CD4-positive, alpha-beta T cell (primary cell): ENCODE measurements at regions of chr1 and their contacts with region 1.

Region 1: GRCh38 chr1:34852677-34853217 is 6.8 kb downstream of the SMIM12 start:
- DNase-seq: peak; percentile 74 to 96 (median 84)
- ATAC-seq: peak; percentile 100
- H3K4me3 ChIP-seq: no peak overlapping the region
- H3K4me3 Mint-ChIP-seq: no peak overlapping the region
- H3K27ac ChIP-seq: no peak overlapping the region
- H3K27ac Mint-ChIP-seq: peak overlapping the region; percentile 48
- H3K4me1 ChIP-seq: peaks cover 9% of the 10 kb centered on the region
- H3K4me1 Mint-ChIP-seq: peaks cover 26% of the 10 kb centered on the region
- H3K27me3 ChIP-seq: no peaks in the 10 kb centered on the region
- H3K27me3 Mint-ChIP-seq: no peaks in the 10 kb centered on the region
- CTCF ChIP-seq: peak; percentile 92

Region 2: GRCh38 chr1:34688006-34688741 is 164.6 kb before region 1 on chr1:
- CTCF ChIA-PET with region 1: no interaction called
- POLR2A ChIA-PET with region 1: no interaction called
- intact Hi-C with region 1: no loop called
- DNase-seq: no peak
- ATAC-seq: no peak
- H3K4me3 ChIP-seq: no peak overlapping the region
- H3K4me3 Mint-ChIP-seq: no peak overlapping the region
- H3K27ac ChIP-seq: no peak overlapping the region
- H3K27ac Mint-ChIP-seq: no peak overlapping the region
- H3K4me1 ChIP-seq: no peaks in the 10 kb centered on the region
- H3K4me1 Mint-ChIP-seq: peaks cover 7% of the 10 kb centered on the region
- H3K27me3 ChIP-seq: peaks cover 0 to 5% of the 10 kb centered on the region in 2 experiments
- H3K27me3 Mint-ChIP-seq: peaks cover 41% of the 10 kb centered on the region
- CTCF ChIP-seq: no peak

Region 3: GRCh38 chr1:34786521-34787325 is 66.0 kb before region 1 on chr1:
- CTCF ChIA-PET with region 1: interaction called, 8 read pairs
- POLR2A ChIA-PET with region 1: no interaction called
- intact Hi-C with region 1: loop called (anchors 1 kb)
- DNase-seq: peak; percentile 29 to 78 (median 48)
- ATAC-seq: peak; percentile 84
- H3K4me3 ChIP-seq: no peak overlapping the region
- H3K4me3 Mint-ChIP-seq: no peak overlapping the region
- H3K27ac ChIP-seq: no peak overlapping the region
- H3K27ac Mint-ChIP-seq: no peak overlapping the region
- H3K4me1 ChIP-seq: peaks cover 5% of the 10 kb centered on the region
- H3K4me1 Mint-ChIP-seq: peaks cover 5% of the 10 kb centered on the region
- H3K27me3 ChIP-seq: peaks cover 14 to 36% of the 10 kb centered on the region in 2 experiments
- H3K27me3 Mint-ChIP-seq: peaks cover 58% of the 10 kb centered on the region
- CTCF ChIP-seq: peak; percentile 73

Region 4: DNA sequence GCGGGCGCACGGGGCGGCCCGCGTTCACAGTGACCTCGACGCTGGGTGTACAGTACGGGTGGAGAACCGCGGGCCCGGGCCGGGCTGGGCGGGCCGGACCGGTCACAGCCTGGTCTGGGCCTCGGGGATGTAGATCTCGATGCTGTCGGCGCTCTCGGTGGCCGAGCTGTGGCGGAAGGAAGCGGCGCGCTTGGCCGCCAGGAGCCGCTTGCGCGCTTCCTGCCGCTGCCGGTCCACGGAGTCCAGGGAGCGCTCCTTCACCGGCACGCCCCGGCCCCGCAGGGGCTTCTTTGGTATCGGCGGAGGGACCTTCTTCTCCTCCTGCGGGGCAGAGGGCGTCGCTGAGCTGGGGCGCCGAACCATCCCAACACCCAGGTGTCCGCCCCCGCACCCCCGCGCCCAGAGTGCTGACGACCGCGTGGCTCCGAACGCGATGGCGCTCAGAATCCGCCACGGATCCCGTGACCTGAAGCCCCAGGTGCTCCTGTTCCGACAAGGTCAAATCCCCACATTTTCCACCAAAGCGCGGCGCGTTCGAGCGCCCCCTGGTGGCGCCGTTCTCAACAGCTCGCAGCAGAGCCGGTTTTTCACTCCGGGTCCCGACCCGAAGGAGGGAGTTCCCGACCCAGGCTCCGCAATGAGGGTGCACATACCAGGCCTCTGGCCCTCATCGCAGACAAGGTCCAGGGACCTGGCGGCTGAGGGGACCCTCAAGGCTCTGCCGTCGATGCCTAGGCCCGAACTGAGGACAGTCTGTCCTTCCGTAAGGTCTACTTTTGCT is 13.4 kb after region 1 on chr1:
- CTCF ChIA-PET with region 1: interaction called, 131 read pairs
- POLR2A ChIA-PET with region 1: interaction called, 7 read pairs
- intact Hi-C with region 1: loop called in 1 of 2 experiments (anchors 1 kb)
- DNase-seq: peak; percentile 81 to 98 (median 92)
- ATAC-seq: peak; percentile 85
- H3K4me3 ChIP-seq: peak overlapping the region; percentile 62
- H3K4me3 Mint-ChIP-seq: peak overlapping the region; percentile 89
- H3K27ac ChIP-seq: peak overlapping the region; percentile 55 to 73
- H3K27ac Mint-ChIP-seq: peak overlapping the region; percentile 82
- H3K4me1 ChIP-seq: peaks cover 54% of the 10 kb centered on the region
- H3K4me1 Mint-ChIP-seq: peaks cover 49% of the 10 kb centered on the region
- H3K27me3 ChIP-seq: peaks cover 0 to 4% of the 10 kb centered on the region in 2 experiments
- H3K27me3 Mint-ChIP-seq: no peaks in the 10 kb centered on the region
- CTCF ChIP-seq: peak; percentile 97

Region 5: GRCh38 chr1:34984793-34985608 is 132.3 kb after region 1 on chr1 and contains the start of gene TMEM35B:
- CTCF ChIA-PET with region 1: interaction called, 6 read pairs
- POLR2A ChIA-PET with region 1: no interaction called
- intact Hi-C with region 1: loop called in 1 of 2 experiments (anchors 5 kb)
- DNase-seq: peak; percentile 64 to 88 (median 78)
- ATAC-seq: peak; percentile 97
- H3K4me3 ChIP-seq: peak within 1 kb of the TSS; percentile 65
- H3K4me3 Mint-ChIP-seq: peak within 1 kb of the TSS; percentile 97
- H3K27ac ChIP-seq: peak within 1 kb of the TSS; percentile 76 to 77
- H3K27ac Mint-ChIP-seq: peak within 1 kb of the TSS; percentile 87
- H3K4me1 ChIP-seq: peaks cover 41% of the 10 kb centered on the region
- H3K4me1 Mint-ChIP-seq: peaks cover 39% of the 10 kb centered on the region
- H3K27me3 ChIP-seq: no peaks in the 10 kb centered on the region
- H3K27me3 Mint-ChIP-seq: no peaks in the 10 kb centered on the region
- CTCF ChIP-seq: peak; percentile 33
- total RNA-seq, gene TMEM35B: 0.85 to 2.3 TPM

Region 6: GRCh38 chr1:35298464-35298863 is 445.7 kb after region 1 on chr1:
- CTCF ChIA-PET with region 1: no interaction called
- POLR2A ChIA-PET with region 1: no interaction called
- intact Hi-C with region 1: loop called (anchors 2 to 5 kb)
- DNase-seq: peak in 11 of 14 experiments; percentile 1 to 70 (median 10)
- ATAC-seq: peak; percentile 94
- H3K4me3 ChIP-seq: no peak overlapping the region
- H3K4me3 Mint-ChIP-seq: no peak overlapping the region
- H3K27ac ChIP-seq: no peak overlapping the region
- H3K27ac Mint-ChIP-seq: no peak overlapping the region
- H3K4me1 ChIP-seq: no peaks in the 10 kb centered on the region
- H3K4me1 Mint-ChIP-seq: peaks cover 11% of the 10 kb centered on the region
- H3K27me3 ChIP-seq: no peaks in the 10 kb centered on the region
- H3K27me3 Mint-ChIP-seq: no peaks in the 10 kb centered on the region
- CTCF ChIP-seq: peak; percentile 63

Region 7: DNA sequence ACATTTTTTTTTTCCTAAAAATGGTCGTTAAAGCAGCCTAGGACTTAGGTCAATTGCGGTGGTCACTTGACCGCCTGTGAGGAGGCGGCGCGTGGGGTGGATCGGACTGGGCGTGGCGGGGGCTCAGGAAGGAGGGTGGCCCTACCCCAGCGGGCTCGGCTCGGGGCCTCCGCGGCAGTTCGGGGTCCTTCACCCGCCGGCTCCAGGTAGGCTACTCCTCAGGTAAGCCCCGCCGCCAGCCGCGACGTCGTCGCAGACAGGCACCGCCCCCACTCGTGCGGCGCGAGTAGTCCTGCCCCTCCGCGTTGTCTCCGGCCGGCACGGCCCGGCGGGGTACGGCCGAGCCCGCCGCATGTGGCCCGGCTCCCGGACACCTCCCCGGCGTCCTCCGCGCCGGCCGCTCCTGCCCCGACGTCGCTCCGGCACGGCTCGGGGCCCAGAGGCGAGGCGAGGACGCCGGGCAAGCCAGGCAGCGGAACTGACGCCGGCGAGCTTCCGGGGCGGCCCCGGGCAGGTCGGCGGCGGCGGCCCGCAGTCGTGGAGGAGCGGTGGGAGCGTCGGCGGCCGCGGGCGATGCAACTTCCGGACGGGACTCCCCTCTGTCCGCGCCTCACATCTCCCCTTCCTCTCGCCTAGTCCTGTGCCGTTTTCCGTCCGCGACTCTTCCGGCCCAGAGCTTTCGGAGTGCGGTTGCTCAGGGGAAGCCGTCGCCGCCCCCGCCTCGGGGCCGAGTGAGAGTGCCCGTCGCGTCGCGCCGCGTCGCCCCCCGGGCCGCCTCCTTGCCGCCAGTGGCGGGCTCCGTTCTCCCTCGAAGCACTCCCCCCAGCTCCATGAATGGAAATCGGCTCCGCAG is 1078.1 kb after region 1 on chr1 and contains the start of gene AGO3:
- CTCF ChIA-PET with region 1: no interaction called
- POLR2A ChIA-PET with region 1: no interaction called
- intact Hi-C with region 1: loop called in 1 of 2 experiments (anchors 5 kb)
- DNase-seq: peak; percentile 73 to 96 (median 80)
- ATAC-seq: peak; percentile 79
- H3K4me3 ChIP-seq: peak within 1 kb of the TSS; percentile 78
- H3K4me3 Mint-ChIP-seq: peak within 1 kb of the TSS; percentile 94
- H3K27ac ChIP-seq: peak within 1 kb of the TSS; percentile 91 to 97
- H3K27ac Mint-ChIP-seq: peak within 1 kb of the TSS; percentile 96
- H3K4me1 ChIP-seq: peaks cover 19% of the 10 kb centered on the region
- H3K4me1 Mint-ChIP-seq: peaks cover 44% of the 10 kb centered on the region
- H3K27me3 ChIP-seq: no peaks in the 10 kb centered on the region
- H3K27me3 Mint-ChIP-seq: no peaks in the 10 kb centered on the region
- CTCF ChIP-seq: no peak
- total RNA-seq, gene AGO3: 31.3 to 34.5 TPM